IMR-90 (cell line): ENCODE measurements at regions of chr7 and their contacts with region 1.

Region 1: DNA sequence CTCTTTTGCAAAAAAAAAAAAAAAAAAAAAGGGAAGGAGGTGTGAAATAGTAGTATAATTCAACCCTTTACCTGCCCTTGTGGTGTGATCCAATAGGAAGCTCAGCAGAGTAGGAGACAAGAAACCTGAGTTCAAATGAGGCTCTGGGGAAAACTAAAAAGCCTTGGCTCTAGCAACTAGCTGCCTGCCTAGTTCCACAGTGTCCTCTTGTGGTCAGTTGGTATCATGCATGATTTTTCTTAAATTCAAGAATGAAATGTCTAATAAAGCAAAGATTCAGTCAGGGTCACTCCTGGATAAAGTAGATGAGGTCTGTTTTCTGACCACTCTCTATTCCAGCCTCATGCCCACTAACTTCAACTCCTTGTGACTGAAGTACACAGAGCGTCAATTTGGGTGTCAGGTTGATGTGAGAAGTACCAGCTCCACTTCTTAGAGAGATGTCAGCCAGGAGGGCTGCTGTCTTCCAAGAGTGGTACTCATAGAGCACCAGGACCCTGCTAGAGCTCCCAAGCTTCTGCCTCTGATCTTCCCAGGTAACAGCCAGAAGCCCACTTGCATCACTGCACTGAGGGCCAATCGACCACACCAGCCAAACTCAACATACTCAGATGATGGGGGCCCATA is 10.5 kb downstream of the LSM5 start:
- DNase-seq: peak; percentile 52
- ATAC-seq: peak; percentile 62; the same call in 1 of the 2 replicates
- H3K4me3 ChIP-seq: no peak overlapping the region
- H3K27ac ChIP-seq: no peak overlapping the region
- H3K4me1 ChIP-seq: peaks cover 3% of the 10 kb centered on the region; the same call in 1 of the 2 replicates
- H3K27me3 ChIP-seq: no peaks in the 10 kb centered on the region
- CTCF ChIP-seq: peak; percentile 93
- POLR2A ChIP-seq: no peak
- RAD21 ChIP-seq: peak; percentile 91

Region 2: GRCh38 chr7:32043714-32044113 is 436.0 kb before region 1 on chr7:
- CTCF ChIA-PET with region 1: no interaction called
- POLR2A ChIA-PET with region 1: no interaction called
- dilution Hi-C with region 1: no loop called
- in situ Hi-C with region 1: no loop called
- intact Hi-C with region 1: loop called (anchors 10 kb)
- DNase-seq: peak; percentile 83
- ATAC-seq: peak; percentile 76
- H3K4me3 ChIP-seq: no peak overlapping the region
- H3K27ac ChIP-seq: no peak overlapping the region
- H3K4me1 ChIP-seq: peaks cover 4% of the 10 kb centered on the region
- H3K27me3 ChIP-seq: no peaks in the 10 kb centered on the region
- CTCF ChIP-seq: no peak
- POLR2A ChIP-seq: no peak
- RAD21 ChIP-seq: no peak

Region 3: GRCh38 chr7:32218154-32218467 is 261.6 kb before region 1 on chr7:
- CTCF ChIA-PET with region 1: interaction called, 5 read pairs
- POLR2A ChIA-PET with region 1: no interaction called
- dilution Hi-C with region 1: no loop called
- in situ Hi-C with region 1: loop called (anchors 5 kb)
- intact Hi-C with region 1: no loop called
- DNase-seq: no peak
- ATAC-seq: no peak
- H3K4me3 ChIP-seq: no peak overlapping the region
- H3K27ac ChIP-seq: no peak overlapping the region
- H3K4me1 ChIP-seq: no peaks in the 10 kb centered on the region
- H3K27me3 ChIP-seq: peaks cover 7% of the 10 kb centered on the region
- CTCF ChIP-seq: no peak
- POLR2A ChIP-seq: no peak
- RAD21 ChIP-seq: no peak

Region 4: GRCh38 chr7:32588657-32589056 is 109.0 kb after region 1 on chr7:
- CTCF ChIA-PET with region 1: no interaction called
- POLR2A ChIA-PET with region 1: no interaction called
- dilution Hi-C with region 1: no loop called
- in situ Hi-C with region 1: no loop called
- intact Hi-C with region 1: no loop called
- DNase-seq: peak; percentile 73
- ATAC-seq: peak; percentile 45; the same call in 1 of the 2 replicates
- H3K4me3 ChIP-seq: no peak overlapping the region
- H3K27ac ChIP-seq: peak overlapping the region; percentile 0; the same call in 1 of the 2 replicates
- H3K4me1 ChIP-seq: peaks cover 17% of the 10 kb centered on the region
- H3K27me3 ChIP-seq: no peaks in the 10 kb centered on the region
- CTCF ChIP-seq: no peak
- POLR2A ChIP-seq: no peak
- RAD21 ChIP-seq: no peak

Region 5: DNA sequence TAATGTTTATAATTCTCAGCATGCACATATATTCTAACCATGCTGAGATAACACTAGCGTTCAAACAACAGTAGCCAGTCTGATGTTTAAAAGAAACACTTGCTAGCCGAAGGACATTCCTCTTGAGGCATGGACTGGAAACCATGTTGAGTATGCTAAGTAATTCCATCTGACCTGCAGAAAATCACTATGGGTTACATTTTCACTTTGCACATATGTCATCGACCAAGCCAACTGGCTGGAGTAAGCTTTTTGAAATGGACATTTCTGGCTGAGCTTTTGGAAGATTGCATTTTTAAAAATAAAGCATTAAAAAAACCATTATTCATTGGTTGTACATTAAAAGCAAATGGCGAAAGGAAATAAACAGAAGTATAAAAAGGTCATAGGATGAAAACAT is 737.9 kb after region 1 on chr7:
- CTCF ChIA-PET with region 1: no interaction called
- POLR2A ChIA-PET with region 1: no interaction called
- dilution Hi-C with region 1: no loop called
- in situ Hi-C with region 1: no loop called
- intact Hi-C with region 1: no loop called
- DNase-seq: no peak
- ATAC-seq: no peak
- H3K4me3 ChIP-seq: no peak overlapping the region
- H3K27ac ChIP-seq: no peak overlapping the region
- H3K4me1 ChIP-seq: no peaks in the 10 kb centered on the region
- H3K27me3 ChIP-seq: no peaks in the 10 kb centered on the region
- CTCF ChIP-seq: no peak
- POLR2A ChIP-seq: no peak
- RAD21 ChIP-seq: no peak